ENCODE measurements at regions of chr1 and their contacts with region 1.

Region 1: GRCh38 chr1:22673486-22674409 is 20.7 kb downstream of the C1QB start:
- DNase-seq: no peak
- ATAC-seq: no peak
- H3K4me3 ChIP-seq: no peak overlapping the region
- H3K4me3 Mint-ChIP-seq: no peak overlapping the region
- H3K27ac ChIP-seq: no peak overlapping the region
- H3K27ac Mint-ChIP-seq: no peak overlapping the region
- H3K4me1 ChIP-seq: no peaks in the 10 kb centered on the region
- H3K4me1 Mint-ChIP-seq: no peaks in the 10 kb centered on the region
- H3K27me3 ChIP-seq: no peaks in the 10 kb centered on the region
- H3K27me3 Mint-ChIP-seq: peaks cover 8 to 24% of the 10 kb centered on the region in 2 donors
- CTCF ChIP-seq: peak; percentile 20

Region 2: DNA sequence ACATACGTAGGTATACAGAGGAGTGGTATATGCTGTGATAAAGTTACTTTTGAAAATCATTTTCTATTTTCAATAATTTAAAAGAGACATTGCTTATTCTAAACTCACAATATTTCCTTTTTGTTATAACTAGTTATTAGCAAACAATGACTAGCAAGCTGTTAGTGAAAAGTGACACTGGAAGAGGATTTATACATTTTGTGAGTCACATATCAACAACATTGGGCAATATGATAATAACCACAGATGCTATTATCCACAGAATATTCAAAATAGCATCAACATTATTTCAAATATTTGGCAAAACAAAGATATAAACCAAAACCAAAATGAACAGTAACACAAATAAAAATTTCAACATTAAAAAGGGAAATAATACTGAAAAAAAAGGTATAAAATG is 1782.7 kb before region 1 on chr1:
- intact Hi-C with region 1: no loop called
- DNase-seq: no peak
- ATAC-seq: no peak
- H3K4me3 ChIP-seq: no peak overlapping the region
- H3K4me3 Mint-ChIP-seq: no peak overlapping the region
- H3K27ac ChIP-seq: no peak overlapping the region
- H3K27ac Mint-ChIP-seq: no peak overlapping the region
- H3K4me1 ChIP-seq: no peaks in the 10 kb centered on the region
- H3K4me1 Mint-ChIP-seq: no peaks in the 10 kb centered on the region
- H3K27me3 ChIP-seq: no peaks in the 10 kb centered on the region
- H3K27me3 Mint-ChIP-seq: no peaks in the 10 kb centered on the region
- CTCF ChIP-seq: no peak

Region 3: GRCh38 chr1:22889213-22889827 is 215.6 kb after region 1 on chr1:
- intact Hi-C with region 1: loop called (anchors 1 kb)
- DNase-seq: peak in 1 of 2 donors; percentile 31
- ATAC-seq: peak in 2 of 3 donors; percentile 41 to 66
- H3K4me3 ChIP-seq: no peak overlapping the region
- H3K4me3 Mint-ChIP-seq: no peak overlapping the region
- H3K27ac ChIP-seq: no peak overlapping the region
- H3K27ac Mint-ChIP-seq: peak overlapping the region in 1 of 2 donors; percentile 1
- H3K4me1 ChIP-seq: peaks cover 15% of the 10 kb centered on the region
- H3K4me1 Mint-ChIP-seq: peaks cover 23 to 32% of the 10 kb centered on the region in 2 donors
- H3K27me3 ChIP-seq: no peaks in the 10 kb centered on the region
- H3K27me3 Mint-ChIP-seq: peaks cover 0 to 6% of the 10 kb centered on the region in 2 donors
- CTCF ChIP-seq: peak; percentile 86